Activated naive CD4-positive, alpha-beta T cell treated with anti-CD3 and anti-CD28 coated beads for 36 hours (primary cell): ENCODE measurements at regions of chr3 and their contacts with region 1.

Region 1: DNA sequence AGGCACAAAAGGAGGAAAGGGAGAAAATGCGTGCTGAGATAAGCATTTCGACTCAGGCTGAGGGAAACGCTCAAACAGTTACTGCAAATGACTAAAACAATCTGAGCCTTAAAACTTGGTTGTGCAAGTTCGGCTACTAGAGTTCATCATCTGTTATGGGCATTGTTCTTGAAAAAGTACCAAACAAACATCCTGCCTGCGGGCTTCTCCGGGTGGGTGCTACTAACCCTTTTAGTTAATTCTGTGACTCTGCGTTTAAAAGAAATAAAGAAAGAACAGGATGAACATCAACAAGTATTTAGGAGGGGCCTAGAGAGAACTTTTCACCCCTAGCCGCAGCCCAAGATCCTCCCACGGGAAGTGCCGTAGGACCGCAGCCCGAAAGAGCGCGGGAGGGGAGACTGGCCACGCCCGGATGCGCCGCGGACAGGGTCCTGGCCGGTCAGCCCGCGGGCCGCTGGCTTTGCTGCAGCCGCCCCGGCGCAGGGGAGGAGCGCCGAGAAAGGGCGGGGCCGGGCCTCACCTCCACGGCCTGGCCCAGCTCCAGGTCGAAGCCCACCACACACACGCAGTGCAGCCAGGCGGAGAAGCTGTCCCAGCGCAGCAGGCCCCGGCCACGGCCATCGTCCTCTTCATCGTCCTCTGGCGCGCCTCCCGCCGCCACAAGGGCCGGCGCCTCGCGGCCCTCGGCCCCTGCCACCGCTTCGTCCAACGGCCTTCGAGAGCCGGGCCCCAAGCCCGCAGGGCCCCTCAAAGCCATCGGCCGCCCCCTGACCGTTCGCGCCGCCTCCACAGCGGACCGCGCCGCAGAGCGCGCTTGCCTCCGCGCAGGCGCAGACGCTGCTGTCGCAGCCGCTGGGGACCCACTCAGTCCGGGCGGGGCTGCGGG is at the start of gene DENND6A:
- DNase-seq: peak; percentile 70
- H3K4me3 Mint-ChIP-seq: peak within 1 kb of the TSS; percentile 89
- H3K27ac Mint-ChIP-seq: peak within 1 kb of the TSS; percentile 90
- H3K4me1 Mint-ChIP-seq: peaks cover 35% of the 10 kb centered on the region
- H3K27me3 Mint-ChIP-seq: no peaks in the 10 kb centered on the region
- total RNA-seq, gene DENND6A: 12.3 to 12.4 TPM

Region 2: GRCh38 chr3:56556908-56557830 is 1135.3 kb before region 1 on chr3 and contains the start of gene CCDC66:
- CTCF ChIA-PET with region 1: no interaction called
- intact Hi-C with region 1: loop called (anchors 5 kb)
- DNase-seq: peak; percentile 97
- H3K4me3 Mint-ChIP-seq: peak within 1 kb of the TSS; percentile 94
- H3K27ac Mint-ChIP-seq: peak within 1 kb of the TSS; percentile 97
- H3K4me1 Mint-ChIP-seq: peaks cover 26% of the 10 kb centered on the region
- H3K27me3 Mint-ChIP-seq: no peaks in the 10 kb centered on the region
- total RNA-seq, gene CCDC66: 29.0 to 29.3 TPM

Region 3: DNA sequence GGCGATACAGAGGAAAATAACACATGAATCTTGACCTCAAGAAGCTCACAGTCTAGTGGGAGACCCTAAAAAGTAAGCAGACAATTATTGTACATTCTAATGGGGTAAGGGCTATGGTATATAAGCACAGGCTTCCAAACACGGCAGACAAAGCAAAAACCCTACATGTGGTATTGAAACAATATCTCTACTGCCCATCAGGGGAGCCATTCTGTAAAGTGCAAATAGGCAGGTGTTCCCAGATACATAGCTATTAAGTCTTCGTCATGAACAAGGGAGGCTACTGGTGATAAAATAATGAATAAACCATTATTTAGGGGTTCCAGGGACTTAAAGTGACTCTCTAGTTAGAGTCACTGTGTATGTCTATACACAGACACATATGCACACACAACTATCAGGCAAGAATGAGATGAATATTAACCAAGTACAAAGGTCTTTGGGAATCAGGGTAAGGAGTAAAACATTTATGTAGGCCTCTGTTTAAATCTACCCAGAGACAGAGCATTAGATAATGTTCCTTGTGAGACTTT is 361.4 kb before region 1 on chr3:
- CTCF ChIA-PET with region 1: no interaction called
- intact Hi-C with region 1: no loop called
- DNase-seq: no peak
- H3K4me3 Mint-ChIP-seq: no peak overlapping the region
- H3K27ac Mint-ChIP-seq: no peak overlapping the region
- H3K4me1 Mint-ChIP-seq: no peaks in the 10 kb centered on the region
- H3K27me3 Mint-ChIP-seq: no peaks in the 10 kb centered on the region

Region 4: DNA sequence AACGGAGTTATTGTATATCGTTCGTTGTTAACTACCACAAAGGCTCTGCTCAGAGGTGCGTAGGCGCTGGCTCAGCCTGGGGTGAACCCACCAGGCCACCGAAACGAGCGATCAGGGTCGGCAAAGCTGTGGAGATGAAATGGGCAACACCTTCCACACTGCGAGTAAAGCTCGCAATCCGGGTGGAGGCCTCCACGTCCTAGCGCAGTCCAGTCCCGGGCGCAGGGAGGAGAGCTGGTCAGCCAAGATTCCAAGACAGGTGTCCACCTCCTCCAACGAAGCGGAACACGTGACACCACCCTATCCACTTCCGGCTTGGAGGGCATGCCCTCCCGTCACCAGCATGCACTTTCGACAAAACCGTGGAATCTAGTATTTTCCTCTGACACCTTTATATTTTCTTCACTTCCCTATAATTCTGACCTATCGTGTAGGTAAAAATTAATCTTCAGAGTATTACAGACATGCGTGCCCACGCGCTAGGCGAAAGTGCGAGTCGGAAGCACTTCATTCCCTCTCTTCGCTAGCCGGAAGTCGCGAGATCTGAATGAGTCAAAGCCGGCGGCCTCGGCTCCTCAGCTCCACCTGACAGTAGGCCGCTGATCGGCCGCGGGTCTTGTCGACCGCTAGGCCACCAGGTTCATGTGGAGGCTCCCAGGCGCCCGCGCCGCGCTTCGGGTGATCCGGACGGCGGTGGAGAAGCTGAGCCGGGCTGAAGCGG is 136.6 kb before region 1 on chr3 and contains the start of gene PDE12:
- CTCF ChIA-PET with region 1: no interaction called
- intact Hi-C with region 1: loop called (anchors 1 kb)
- DNase-seq: peak; percentile 89
- H3K4me3 Mint-ChIP-seq: peak within 1 kb of the TSS; percentile 98
- H3K27ac Mint-ChIP-seq: peak within 1 kb of the TSS; percentile 98
- H3K4me1 Mint-ChIP-seq: peaks cover 33% of the 10 kb centered on the region
- H3K27me3 Mint-ChIP-seq: no peaks in the 10 kb centered on the region
- total RNA-seq, gene PDE12: 15.3 to 15.6 TPM

Region 5: GRCh38 chr3:57755668-57756527 is 63.4 kb after region 1 on chr3 and contains the start of gene SLMAP:
- CTCF ChIA-PET with region 1: interaction called, 3 read pairs
- intact Hi-C with region 1: loop called (anchors 1 kb)
- DNase-seq: peak; percentile 99
- H3K4me3 Mint-ChIP-seq: peak within 1 kb of the TSS; percentile 98
- H3K27ac Mint-ChIP-seq: peak within 1 kb of the TSS; percentile 92
- H3K4me1 Mint-ChIP-seq: peaks cover 36% of the 10 kb centered on the region
- H3K27me3 Mint-ChIP-seq: no peaks in the 10 kb centered on the region
- total RNA-seq, gene SLMAP: 35.1 TPM

Region 6: DNA sequence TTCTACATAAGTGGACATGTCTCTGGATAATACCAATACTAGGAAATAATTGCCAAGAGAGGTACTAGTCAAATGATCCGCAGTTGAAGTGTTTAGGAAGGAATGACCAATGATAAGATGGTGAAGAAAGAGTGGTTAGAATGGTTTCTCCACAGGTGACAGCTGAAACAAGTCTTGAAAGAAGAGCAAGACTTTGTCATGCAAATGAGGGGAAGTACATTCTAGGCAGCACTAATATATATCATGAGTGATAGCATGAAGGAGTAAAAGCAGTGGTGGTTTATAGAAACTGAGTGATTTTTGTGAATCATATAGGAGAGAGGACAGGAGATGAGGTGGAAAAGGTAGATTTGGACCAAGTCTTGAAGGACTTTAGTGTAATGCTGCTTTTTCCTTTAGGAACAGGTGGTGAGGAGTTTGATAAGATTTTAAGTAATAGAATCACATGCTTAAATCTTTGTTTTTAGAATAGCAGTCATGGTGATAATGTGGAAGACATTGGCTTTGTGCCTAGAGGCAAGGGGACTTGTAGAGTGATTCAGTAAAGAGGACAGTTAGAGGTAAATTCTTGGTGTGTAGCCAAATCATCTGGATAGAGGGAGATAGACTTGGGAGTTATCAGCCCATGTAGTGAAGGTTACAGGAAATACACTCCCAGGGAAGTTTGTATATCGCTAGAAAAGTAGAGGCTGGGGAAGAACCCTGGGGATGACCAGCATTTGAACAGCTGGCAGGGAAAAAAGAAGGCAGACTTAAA is 95.5 kb after region 1 on chr3:
- CTCF ChIA-PET with region 1: no interaction called
- intact Hi-C with region 1: loop called (anchors 1 kb)
- DNase-seq: no peak
- H3K4me3 Mint-ChIP-seq: no peak overlapping the region
- H3K27ac Mint-ChIP-seq: no peak overlapping the region
- H3K4me1 Mint-ChIP-seq: peaks cover 31% of the 10 kb centered on the region
- H3K27me3 Mint-ChIP-seq: no peaks in the 10 kb centered on the region

Region 7: DNA sequence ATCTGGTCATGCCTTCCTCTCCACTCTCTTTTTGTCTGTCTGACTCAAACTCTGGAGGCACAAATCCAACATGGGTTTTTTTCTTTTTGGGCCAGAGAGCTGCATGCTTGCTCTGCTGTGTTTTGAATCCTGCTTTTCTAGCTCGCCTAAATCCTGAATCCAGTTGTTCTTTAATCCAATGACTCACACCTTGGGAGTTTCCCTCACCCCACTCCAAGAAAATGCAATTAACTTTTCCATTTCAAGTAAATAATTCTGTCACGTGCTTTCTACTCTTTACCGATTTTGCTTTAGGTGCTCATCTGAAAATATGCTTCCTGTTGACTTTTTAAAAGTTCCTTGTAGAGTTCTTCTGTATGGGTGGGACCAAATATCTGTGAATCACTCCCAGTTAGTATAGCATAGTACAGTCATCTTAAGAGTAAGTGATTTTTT is 111.2 kb after region 1 on chr3:
- CTCF ChIA-PET with region 1: no interaction called
- intact Hi-C with region 1: loop called (anchors 1 kb)
- DNase-seq: no peak
- H3K4me3 Mint-ChIP-seq: peak overlapping the region; percentile 3
- H3K27ac Mint-ChIP-seq: peak overlapping the region; percentile 33
- H3K4me1 Mint-ChIP-seq: peaks cover 70% of the 10 kb centered on the region
- H3K27me3 Mint-ChIP-seq: no peaks in the 10 kb centered on the region

Region 8: GRCh38 chr3:57826245-57826951 is 133.9 kb after region 1 on chr3:
- CTCF ChIA-PET with region 1: no interaction called
- intact Hi-C with region 1: loop called (anchors 5 kb)
- DNase-seq: no peak
- H3K4me3 Mint-ChIP-seq: no peak overlapping the region
- H3K27ac Mint-ChIP-seq: no peak overlapping the region
- H3K4me1 Mint-ChIP-seq: peaks cover 19% of the 10 kb centered on the region
- H3K27me3 Mint-ChIP-seq: no peaks in the 10 kb centered on the region